ENCODE measurements at regions of chr9 and their contacts with region 1.

Region 1: DNA sequence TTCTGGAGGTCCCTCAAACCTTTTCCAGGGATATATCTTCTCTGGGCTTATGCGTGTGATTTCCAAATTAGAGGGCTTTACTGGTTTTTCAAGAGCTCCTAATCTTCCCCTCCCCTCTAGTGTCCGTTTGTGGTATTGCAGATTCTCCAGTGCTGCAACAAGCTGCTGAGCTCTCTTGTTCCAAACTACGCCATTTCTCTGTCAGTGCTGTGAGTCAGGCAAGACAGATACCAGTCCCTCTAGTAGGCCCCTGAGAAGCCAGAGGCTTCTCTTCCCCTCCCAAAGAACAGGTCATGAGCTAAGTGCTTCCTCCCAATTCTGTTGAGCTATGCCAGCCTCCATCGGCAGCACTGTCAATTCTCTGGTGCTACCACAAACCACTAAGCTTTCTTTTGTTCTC is 149.5 kb downstream of the FANCC start:
- DNase-seq: peak; percentile 47 to 56
- H3K4me3 ChIP-seq: no peak overlapping the region
- H3K27ac ChIP-seq: no peak overlapping the region
- H3K4me1 ChIP-seq: 0 out of 2 replicates have a peak, but pooled peaks cover 10% of the 10 kb centered on the region
- H3K27me3 ChIP-seq: no peaks in the 10 kb centered on the region
- CTCF ChIP-seq: peak; percentile 93

Region 2: GRCh38 chr9:94973451-94973941 is 194.5 kb before region 1 on chr9:
- CTCF ChIA-PET with region 1: no interaction called
- POLR2A ChIA-PET with region 1: no interaction called
- intact Hi-C with region 1: no loop called
- DNase-seq: no peak
- H3K4me3 ChIP-seq: no peak overlapping the region
- H3K27ac ChIP-seq: no peak overlapping the region
- H3K4me1 ChIP-seq: no peaks in the 10 kb centered on the region
- H3K27me3 ChIP-seq: no peaks in the 10 kb centered on the region
- CTCF ChIP-seq: no peak

Region 3: DNA sequence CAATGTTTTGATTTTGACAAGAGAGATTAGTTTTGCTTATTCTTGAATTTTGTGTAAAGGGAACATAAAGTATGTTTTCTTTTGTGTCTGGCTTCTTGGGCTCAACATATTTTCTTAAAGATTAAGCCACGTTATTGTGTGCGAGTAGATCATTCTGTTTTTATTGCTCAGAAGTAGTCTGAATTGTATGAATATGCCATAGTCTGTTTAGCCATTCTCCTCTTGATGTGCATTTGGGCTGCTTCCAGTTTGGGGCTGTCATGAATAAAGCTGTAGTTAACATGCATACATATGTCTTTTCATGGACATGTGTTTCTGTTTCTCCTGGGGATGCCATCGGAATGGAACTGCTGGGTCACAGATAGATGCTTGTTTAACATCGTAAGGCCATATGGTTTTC is 49.4 kb before region 1 on chr9:
- CTCF ChIA-PET with region 1: no interaction called
- POLR2A ChIA-PET with region 1: no interaction called
- intact Hi-C with region 1: no loop called
- DNase-seq: no peak
- H3K4me3 ChIP-seq: no peak overlapping the region
- H3K27ac ChIP-seq: no peak overlapping the region
- H3K4me1 ChIP-seq: no peaks in the 10 kb centered on the region
- H3K27me3 ChIP-seq: no peaks in the 10 kb centered on the region
- CTCF ChIP-seq: no peak

Region 4: DNA sequence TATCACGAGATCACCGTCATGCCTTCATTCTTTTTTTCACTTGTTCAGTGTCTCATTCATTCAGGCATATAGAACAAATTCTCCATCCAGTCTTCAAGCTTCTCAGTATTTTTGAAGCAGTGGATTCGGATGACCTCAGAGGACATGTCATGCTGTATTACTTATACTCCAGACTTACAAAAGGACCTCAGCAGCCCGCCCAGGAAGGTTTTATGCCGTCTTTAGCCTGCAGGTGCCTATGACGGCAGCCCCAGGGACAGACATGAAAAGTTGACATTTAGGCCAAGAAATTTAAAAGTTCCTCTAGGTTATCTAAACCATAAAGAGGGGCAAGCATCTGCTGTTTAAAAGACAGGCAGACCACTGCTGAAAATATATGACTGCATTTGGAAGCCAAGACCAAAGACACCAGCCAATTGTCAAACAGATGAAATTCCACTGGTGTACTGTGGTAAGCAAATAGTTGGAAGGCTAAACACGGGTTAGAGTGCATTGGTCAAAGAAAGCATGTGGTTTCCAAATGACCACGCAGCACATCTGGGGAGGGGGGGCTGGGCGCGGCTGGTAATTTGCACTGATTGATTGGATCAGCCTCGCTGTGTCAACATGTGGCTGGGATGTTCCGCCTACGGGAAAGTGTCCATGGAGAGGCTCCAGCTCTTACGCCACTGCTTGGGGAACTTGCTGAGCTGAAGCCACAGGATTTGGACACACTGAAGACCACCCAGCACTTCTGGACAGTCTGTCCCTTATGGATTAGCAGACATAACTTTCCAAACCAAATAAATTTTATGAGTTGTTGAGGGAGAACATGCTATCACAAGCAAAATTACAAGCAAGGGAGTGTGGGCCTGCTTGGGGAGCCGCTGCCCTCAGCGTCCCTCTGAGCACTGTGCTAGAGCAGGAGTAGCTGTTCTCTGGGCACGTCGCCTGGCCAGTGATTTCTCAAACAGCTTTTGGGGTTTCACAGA is 24.1 kb before region 1 on chr9:
- CTCF ChIA-PET with region 1: interaction called, 3 read pairs
- POLR2A ChIA-PET with region 1: interaction called, 12 read pairs
- intact Hi-C with region 1: no loop called
- DNase-seq: no peak
- H3K4me3 ChIP-seq: no peak overlapping the region
- H3K27ac ChIP-seq: no peak overlapping the region
- H3K4me1 ChIP-seq: no peaks in the 10 kb centered on the region
- H3K27me3 ChIP-seq: no peaks in the 10 kb centered on the region
- CTCF ChIP-seq: no peak

Region 5: DNA sequence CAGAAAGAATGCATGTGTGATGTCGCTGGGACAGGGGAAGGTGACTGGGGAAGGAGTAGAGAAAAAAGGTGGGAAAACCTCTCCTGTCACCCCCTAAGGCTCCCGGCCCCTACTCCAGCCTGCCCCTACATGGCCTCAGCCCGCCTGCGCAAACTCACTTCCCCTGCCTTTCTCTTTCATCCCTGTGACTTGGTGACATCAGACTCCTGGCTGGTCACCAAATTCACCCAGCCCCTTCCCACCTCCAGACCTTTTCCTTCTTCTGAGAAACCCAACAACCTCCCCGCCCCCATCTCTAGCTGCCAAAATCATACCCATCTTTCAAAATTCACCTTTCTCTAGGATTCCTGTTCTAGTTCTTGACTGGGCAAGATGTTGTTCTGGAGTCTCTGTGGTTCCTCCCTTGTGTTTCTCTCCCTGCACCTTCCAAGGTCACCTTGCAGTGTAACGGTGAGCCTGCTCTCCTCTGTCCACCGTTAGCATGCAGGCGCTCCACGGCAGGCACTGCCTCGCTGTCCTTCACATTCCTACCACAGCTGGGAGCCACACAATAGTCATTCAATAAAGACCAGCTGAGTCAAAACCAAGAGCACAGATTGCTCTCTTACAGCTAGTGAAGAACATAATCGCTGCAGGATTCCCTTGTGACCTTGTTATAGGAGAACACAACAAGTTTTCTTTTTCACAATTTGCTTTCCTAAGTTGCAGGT is 15.0 kb after region 1 on chr9:
- CTCF ChIA-PET with region 1: no interaction called
- POLR2A ChIA-PET with region 1: no interaction called
- intact Hi-C with region 1: no loop called
- DNase-seq: no peak
- H3K4me3 ChIP-seq: no peak overlapping the region
- H3K27ac ChIP-seq: no peak overlapping the region
- H3K4me1 ChIP-seq: no peaks in the 10 kb centered on the region
- H3K27me3 ChIP-seq: no peaks in the 10 kb centered on the region
- CTCF ChIP-seq: no peak

Region 6: DNA sequence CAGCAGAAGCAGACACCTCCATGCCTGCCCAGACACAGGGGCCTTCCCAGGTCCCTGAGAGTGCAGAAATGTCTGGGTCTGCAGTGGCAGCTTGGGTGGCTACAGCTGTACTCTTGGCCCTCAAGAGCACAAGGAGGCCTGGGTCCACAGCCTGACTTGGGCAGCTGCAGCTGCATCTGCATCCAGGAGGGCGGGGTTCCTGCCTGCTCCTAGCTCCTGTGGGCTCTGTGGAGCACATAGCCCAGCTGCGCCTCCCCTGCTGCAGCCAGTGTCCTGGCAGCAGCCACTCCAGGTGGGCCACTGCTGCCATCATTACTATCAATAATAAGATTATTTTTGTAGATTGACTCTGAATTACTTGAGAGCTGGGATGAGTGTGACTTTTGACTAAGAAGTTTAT is 510.8 kb after region 1 on chr9:
- CTCF ChIA-PET with region 1: interaction called, 15 read pairs
- POLR2A ChIA-PET with region 1: no interaction called
- intact Hi-C with region 1: no loop called
- DNase-seq: no peak
- H3K4me3 ChIP-seq: no peak overlapping the region
- H3K27ac ChIP-seq: no peak overlapping the region
- H3K4me1 ChIP-seq: no peaks in the 10 kb centered on the region
- H3K27me3 ChIP-seq: peaks cover 70% of the 10 kb centered on the region
- CTCF ChIP-seq: no peak

Measured in PC-9 (cell line).